Ascending aorta (tissue), 2 donors: ENCODE measurements at regions of chr7 and their contacts with region 1.

Region 1: DNA sequence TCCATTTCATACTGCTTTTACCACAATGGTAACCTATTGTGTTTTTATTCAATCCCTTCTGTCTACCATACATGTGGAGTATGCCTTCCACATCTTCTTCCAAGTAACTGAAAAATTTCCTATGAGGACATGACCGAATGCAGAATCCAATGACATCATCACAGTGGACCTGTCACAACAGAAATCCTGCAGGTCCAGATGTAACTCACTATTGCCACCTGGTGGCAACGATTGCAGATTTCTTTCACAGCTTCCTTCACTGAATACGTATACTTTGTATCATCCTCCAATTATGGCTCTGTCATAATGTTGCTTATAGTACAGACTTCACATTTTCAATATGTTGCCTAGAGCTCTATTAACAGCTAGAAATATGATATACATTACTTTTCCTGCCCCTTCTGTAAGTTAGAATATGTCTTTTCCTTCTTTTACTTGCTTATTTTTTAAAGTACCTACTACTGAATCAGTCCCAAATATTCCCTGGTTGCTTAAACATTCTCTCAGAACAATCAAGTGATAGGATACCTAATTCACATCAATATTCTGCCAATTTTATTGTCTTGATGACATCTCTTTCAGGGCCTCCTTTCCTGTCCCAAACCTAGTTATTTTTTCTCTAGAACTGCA is 45.4 kb downstream of the SLC13A1 start:
- DNase-seq: peak in 1 of 2 donors; percentile 77
- H3K4me3 ChIP-seq: no peak overlapping the region
- H3K27ac ChIP-seq: no peak overlapping the region
- H3K4me1 ChIP-seq: no peaks in the 10 kb centered on the region
- H3K27me3 ChIP-seq: no peaks in the 10 kb centered on the region
- CTCF ChIP-seq: peak; percentile 36 to 66 (median 44)

Region 2: DNA sequence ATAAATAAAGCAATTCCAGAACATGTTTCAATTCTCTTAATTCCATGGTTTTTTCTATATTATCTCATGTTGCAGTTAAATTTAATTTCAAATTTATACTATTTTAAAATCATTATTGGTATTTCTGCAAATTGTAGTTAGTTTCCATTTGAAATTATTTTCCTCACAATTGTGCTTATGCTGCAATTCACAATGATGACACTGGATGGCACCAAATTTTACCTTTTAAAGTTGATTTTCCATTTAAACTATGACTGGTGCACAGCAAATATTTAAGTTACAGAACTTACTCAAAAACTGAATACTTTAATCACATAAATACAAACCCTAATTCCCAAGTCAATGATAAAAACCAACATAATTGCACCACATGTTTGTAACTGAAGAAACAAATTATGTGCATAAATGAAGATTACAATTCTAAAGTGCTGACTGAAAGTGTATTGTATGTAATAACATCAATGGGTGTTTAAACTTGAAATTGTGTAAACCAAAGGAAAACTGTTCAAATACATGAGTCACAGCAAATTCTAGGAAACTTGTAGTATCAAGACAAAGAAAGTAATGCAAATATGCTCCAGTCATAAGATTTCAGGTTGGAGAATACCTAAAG is 935.0 kb before region 1 on chr7:
- intact Hi-C with region 1: loop called (anchors 2 kb)
- DNase-seq: no peak
- H3K4me3 ChIP-seq: no peak overlapping the region
- H3K27ac ChIP-seq: no peak overlapping the region
- H3K4me1 ChIP-seq: no peaks in the 10 kb centered on the region
- H3K27me3 ChIP-seq: no peaks in the 10 kb centered on the region
- CTCF ChIP-seq: peak; percentile 12 to 55 (median 47)

Region 3: GRCh38 chr7:122803323-122803722 is 351.0 kb before region 1 on chr7:
- intact Hi-C with region 1: loop called (anchors 10 kb)
- DNase-seq: no peak
- H3K4me3 ChIP-seq: no peak overlapping the region
- H3K27ac ChIP-seq: no peak overlapping the region
- H3K4me1 ChIP-seq: no peaks in the 10 kb centered on the region
- H3K27me3 ChIP-seq: no peaks in the 10 kb centered on the region
- CTCF ChIP-seq: peak in 2 of 3 experiments; percentile 11 to 31